Endothelial cell of umbilical vein (primary cell): ENCODE measurements at regions of chr10 and their contacts with region 1.

Region 1: GRCh38 chr10:121886997-121887622 is 40.7 kb downstream of the ATE1 start:
- DNase-seq: peak; percentile 76
- H3K4me3 ChIP-seq: no peak overlapping the region
- H3K27ac ChIP-seq: no peak overlapping the region
- H3K4me1 ChIP-seq: peaks cover 6% of the 10 kb centered on the region
- H3K27me3 ChIP-seq: no peaks in the 10 kb centered on the region
- CTCF ChIP-seq: peak; percentile 82 to 85
- POLR2A ChIP-seq: no peak

Region 2: DNA sequence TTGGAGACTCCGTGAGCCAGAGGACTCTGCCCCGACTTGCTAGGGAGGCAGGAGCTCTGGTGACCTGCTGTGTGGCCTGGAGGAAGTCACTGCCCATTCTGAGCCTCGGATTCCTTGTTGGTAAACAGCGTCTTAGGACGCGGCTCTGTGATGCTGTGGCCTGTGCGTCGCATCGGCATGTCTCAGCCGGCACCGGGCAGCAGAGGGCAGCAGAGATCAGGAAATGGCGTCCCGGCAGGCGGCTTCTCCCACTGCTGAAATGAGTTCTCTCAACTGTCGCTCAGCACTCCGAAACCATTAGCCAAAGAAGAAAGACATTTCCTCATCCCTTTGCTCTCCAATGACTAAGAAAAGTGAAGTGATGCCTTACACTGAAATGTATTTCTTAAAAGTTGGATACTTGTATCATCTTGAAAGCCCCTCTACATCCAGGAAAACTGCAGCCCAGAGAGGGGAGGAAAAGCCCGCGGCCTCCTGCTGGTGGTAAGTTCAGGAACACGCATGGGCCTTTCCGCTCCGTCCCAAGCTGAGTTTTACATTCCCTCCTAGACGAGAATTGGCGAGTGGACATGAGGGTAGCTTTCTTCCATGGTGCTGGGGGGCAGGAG is 944.2 kb before region 1 on chr10:
- CTCF ChIA-PET with region 1: interaction called, 9 read pairs
- POLR2A ChIA-PET with region 1: no interaction called
- dilution Hi-C with region 1: no loop called
- intact Hi-C with region 1: loop called (anchors 1 kb)
- DNase-seq: peak; percentile 81
- H3K4me3 ChIP-seq: no peak overlapping the region
- H3K27ac ChIP-seq: no peak overlapping the region
- H3K4me1 ChIP-seq: no peaks in the 10 kb centered on the region
- H3K27me3 ChIP-seq: no peaks in the 10 kb centered on the region
- CTCF ChIP-seq: peak; percentile 83 to 85
- POLR2A ChIP-seq: no peak

Region 3: GRCh38 chr10:120948889-120949608 is 938.1 kb before region 1 on chr10:
- CTCF ChIA-PET with region 1: interaction called, 62 read pairs
- POLR2A ChIA-PET with region 1: no interaction called
- dilution Hi-C with region 1: no loop called
- intact Hi-C with region 1: loop called (anchors 1 kb)
- DNase-seq: peak; percentile 66
- H3K4me3 ChIP-seq: peak overlapping the region in 2 of 3 experiments; percentile 31 to 36
- H3K27ac ChIP-seq: no peak overlapping the region
- H3K4me1 ChIP-seq: peaks cover 9% of the 10 kb centered on the region
- H3K27me3 ChIP-seq: peaks cover 21 to 28% of the 10 kb centered on the region in 2 experiments
- CTCF ChIP-seq: peak; percentile 85 to 91
- POLR2A ChIP-seq: no peak

Region 4: GRCh38 chr10:121112579-121113386 is 774.3 kb before region 1 on chr10:
- CTCF ChIA-PET with region 1: no interaction called
- POLR2A ChIA-PET with region 1: no interaction called
- dilution Hi-C with region 1: no loop called
- intact Hi-C with region 1: no loop called
- DNase-seq: no peak
- H3K4me3 ChIP-seq: no peak overlapping the region
- H3K27ac ChIP-seq: no peak overlapping the region
- H3K4me1 ChIP-seq: no peaks in the 10 kb centered on the region
- H3K27me3 ChIP-seq: no peaks in the 10 kb centered on the region
- CTCF ChIP-seq: no peak
- POLR2A ChIP-seq: no peak

Region 5: GRCh38 chr10:121598207-121598862 is 288.8 kb before region 1 on chr10 and contains the start of gene FGFR2:
- CTCF ChIA-PET with region 1: no interaction called
- POLR2A ChIA-PET with region 1: no interaction called
- dilution Hi-C with region 1: no loop called
- intact Hi-C with region 1: loop called (anchors 5 kb)
- DNase-seq: peak; percentile 73
- H3K4me3 ChIP-seq: peak within 1 kb of the TSS; percentile 30 to 38 (median 35)
- H3K27ac ChIP-seq: no peak within 1 kb of the TSS
- H3K4me1 ChIP-seq: peaks cover 5% of the 10 kb centered on the region
- H3K27me3 ChIP-seq: peaks cover 37 to 49% of the 10 kb centered on the region in 2 experiments
- CTCF ChIP-seq: no peak
- POLR2A ChIP-seq: no peak
- total RNA-seq, gene FGFR2: not detected in 2 replicates

Region 6: DNA sequence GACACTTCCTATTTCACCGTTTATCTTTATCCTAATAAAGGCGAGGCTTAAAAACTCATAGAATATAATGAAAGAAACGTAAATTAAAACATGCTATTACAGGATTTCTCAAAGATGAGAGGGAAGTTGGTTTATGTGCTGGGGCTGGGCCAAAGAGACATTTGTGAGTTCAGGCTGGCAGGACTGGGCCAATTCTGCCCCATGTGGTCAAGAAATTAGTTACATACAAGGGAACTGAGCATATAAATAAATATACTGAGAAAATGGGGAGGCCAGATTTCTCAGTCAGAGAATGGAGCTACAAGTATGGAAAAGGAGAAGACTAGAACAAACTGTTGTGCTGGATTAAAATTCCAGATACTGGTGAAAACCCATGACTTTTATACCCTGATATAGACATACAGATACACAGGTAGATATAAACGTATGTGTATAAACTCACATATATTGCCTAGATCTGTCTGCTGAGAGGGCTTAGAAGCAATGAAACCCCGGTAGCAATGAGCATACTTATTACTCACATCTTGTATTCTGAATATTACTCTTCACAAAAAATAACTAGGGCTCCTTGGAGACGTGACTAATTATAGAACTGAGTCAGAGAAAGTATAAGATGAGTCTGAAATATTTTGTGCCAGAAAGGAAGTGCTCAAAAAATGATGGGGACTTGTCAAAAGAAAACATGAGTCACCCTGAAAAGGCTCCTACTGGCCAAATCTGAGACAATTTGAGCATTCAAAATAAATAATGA is 133.2 kb before region 1 on chr10:
- CTCF ChIA-PET with region 1: no interaction called
- POLR2A ChIA-PET with region 1: no interaction called
- dilution Hi-C with region 1: no loop called
- intact Hi-C with region 1: loop called (anchors 1 kb)
- DNase-seq: peak; percentile 88
- H3K4me3 ChIP-seq: peak overlapping the region in 1 of 3 experiments; percentile 40
- H3K27ac ChIP-seq: peak overlapping the region; percentile 90
- H3K4me1 ChIP-seq: peaks cover 17% of the 10 kb centered on the region
- H3K27me3 ChIP-seq: no peaks in the 10 kb centered on the region
- CTCF ChIP-seq: peak; percentile 22 to 29
- POLR2A ChIP-seq: no peak

Region 7: GRCh38 chr10:121823993-121824463 is 63.1 kb before region 1 on chr10:
- CTCF ChIA-PET with region 1: interaction called, 5 read pairs
- POLR2A ChIA-PET with region 1: no interaction called
- dilution Hi-C with region 1: no loop called
- intact Hi-C with region 1: loop called (anchors 1 kb)
- DNase-seq: peak; percentile 54
- H3K4me3 ChIP-seq: no peak overlapping the region
- H3K27ac ChIP-seq: no peak overlapping the region
- H3K4me1 ChIP-seq: no peaks in the 10 kb centered on the region
- H3K27me3 ChIP-seq: no peaks in the 10 kb centered on the region
- CTCF ChIP-seq: peak; percentile 40 to 59
- POLR2A ChIP-seq: no peak